ENCODE measurements at regions of chr9 and their contacts with region 1.

Region 1: GRCh38 chr9:19230356-19231125 is at the start of gene DENND4C:
- DNase-seq: peak; percentile 68 to 86
- H3K4me3 ChIP-seq: peak within 1 kb of the TSS; percentile 85
- H3K27ac ChIP-seq: peak within 1 kb of the TSS; percentile 68
- H3K4me1 ChIP-seq: peaks cover 16% of the 10 kb centered on the region
- H3K27me3 ChIP-seq: no peaks in the 10 kb centered on the region
- CTCF ChIP-seq: no peak
- total RNA-seq, gene DENND4C: 23.1 and 29.5 TPM in 2 replicates

Region 2: GRCh38 chr9:18976709-18977531 is 253.6 kb before region 1 on chr9:
- CTCF ChIA-PET with region 1: no interaction called
- POLR2A ChIA-PET with region 1: no interaction called
- intact Hi-C with region 1: no loop called
- DNase-seq: no peak
- H3K4me3 ChIP-seq: no peak overlapping the region
- H3K27ac ChIP-seq: no peak overlapping the region
- H3K4me1 ChIP-seq: no peaks in the 10 kb centered on the region
- H3K27me3 ChIP-seq: peaks cover 46% of the 10 kb centered on the region
- CTCF ChIP-seq: no peak

Region 3: GRCh38 chr9:19074836-19075235 is 155.7 kb before region 1 on chr9:
- CTCF ChIA-PET with region 1: no interaction called
- POLR2A ChIA-PET with region 1: interaction called, 12 read pairs
- intact Hi-C with region 1: no loop called
- DNase-seq: peak in 1 of 2 experiments; percentile 79
- H3K4me3 ChIP-seq: no peak overlapping the region
- H3K27ac ChIP-seq: peak overlapping the region; percentile 59
- H3K4me1 ChIP-seq: peaks cover 18% of the 10 kb centered on the region
- H3K27me3 ChIP-seq: no peaks in the 10 kb centered on the region
- CTCF ChIP-seq: no peak

Region 4: GRCh38 chr9:19255112-19255511 is 24.6 kb after region 1 on chr9:
- CTCF ChIA-PET with region 1: no interaction called
- POLR2A ChIA-PET with region 1: interaction called, 11 read pairs
- intact Hi-C with region 1: no loop called
- DNase-seq: no peak
- H3K4me3 ChIP-seq: no peak overlapping the region
- H3K27ac ChIP-seq: no peak overlapping the region
- H3K4me1 ChIP-seq: no peaks in the 10 kb centered on the region
- H3K27me3 ChIP-seq: no peaks in the 10 kb centered on the region
- CTCF ChIP-seq: no peak